ENCODE measurements at regions of chr7 and their contacts with region 1.

Region 1: GRCh38 chr7:120486164-120486563 is 213.2 kb downstream of the KCND2 start:
- DNase-seq: no peak

Region 2: DNA sequence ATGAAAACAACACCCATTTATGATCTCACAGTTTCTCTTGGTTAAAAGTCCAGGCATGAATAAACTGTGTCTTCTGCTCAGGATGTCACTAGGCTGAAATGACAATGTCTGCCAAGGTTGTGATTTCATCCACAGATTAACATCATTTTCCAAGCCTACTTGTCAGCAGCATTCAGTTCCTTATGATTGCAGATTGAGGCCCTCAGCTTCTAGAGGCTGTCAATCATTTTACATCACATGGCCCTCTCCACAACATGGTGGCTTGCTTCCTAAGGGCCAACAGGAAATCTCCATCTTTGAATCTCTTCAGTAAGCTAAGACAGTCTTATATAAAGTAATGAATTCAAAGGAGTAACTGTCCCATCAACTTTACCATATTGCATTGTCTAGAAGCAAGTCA is 1884.1 kb before region 1 on chr7:
- intact Hi-C with region 1: no loop called
- DNase-seq: no peak

Region 3: DNA sequence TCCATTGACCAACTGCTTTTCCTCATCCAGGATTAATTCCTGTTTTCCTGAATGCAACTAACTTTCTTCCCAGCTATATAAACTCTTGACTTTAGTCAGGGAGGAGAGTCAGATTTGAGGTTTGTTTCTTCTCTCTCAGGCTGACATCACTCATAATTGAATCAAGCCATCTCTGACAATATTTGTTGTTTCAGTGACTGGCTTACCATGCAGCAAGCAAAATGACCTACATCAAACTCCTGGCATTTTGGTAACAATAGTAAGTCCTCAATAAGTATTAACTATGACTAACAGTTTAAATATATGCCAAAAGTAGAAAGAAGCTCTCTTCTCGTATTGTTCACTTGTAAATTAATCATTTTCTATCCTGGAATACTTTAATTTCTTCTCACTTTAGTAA is 838.9 kb before region 1 on chr7:
- intact Hi-C with region 1: loop called in 1 of 2 experiments (anchors 5 kb)
- DNase-seq: no peak

Measured in posterior vena cava (tissue), 2 donors.